CD4-positive, alpha-beta memory T cell (primary cell): ENCODE measurements at regions of chr1 and their contacts with region 1.

Region 1: GRCh38 chr1:235128456-235129328 is at the start of gene TOMM20:
- DNase-seq: peak; percentile 95 to 97 (median 96)
- H3K4me3 ChIP-seq: peak within 1 kb of the TSS; percentile 64 to 83
- H3K4me3 Mint-ChIP-seq: peak within 1 kb of the TSS; percentile 89 to 98 (median 97)
- H3K27ac ChIP-seq: peak within 1 kb of the TSS; percentile 94
- H3K27ac Mint-ChIP-seq: peak within 1 kb of the TSS; percentile 95 to 99 (median 97)
- H3K4me1 ChIP-seq: peaks cover 41% of the 10 kb centered on the region
- H3K4me1 Mint-ChIP-seq: peaks cover 19 to 51% (median 32%) of the 10 kb centered on the region in 4 donors
- H3K27me3 ChIP-seq: no peaks in the 10 kb centered on the region
- H3K27me3 Mint-ChIP-seq: no peaks in the 10 kb centered on the region
- total RNA-seq, gene TOMM20: 102 to 108 TPM

Region 2: DNA sequence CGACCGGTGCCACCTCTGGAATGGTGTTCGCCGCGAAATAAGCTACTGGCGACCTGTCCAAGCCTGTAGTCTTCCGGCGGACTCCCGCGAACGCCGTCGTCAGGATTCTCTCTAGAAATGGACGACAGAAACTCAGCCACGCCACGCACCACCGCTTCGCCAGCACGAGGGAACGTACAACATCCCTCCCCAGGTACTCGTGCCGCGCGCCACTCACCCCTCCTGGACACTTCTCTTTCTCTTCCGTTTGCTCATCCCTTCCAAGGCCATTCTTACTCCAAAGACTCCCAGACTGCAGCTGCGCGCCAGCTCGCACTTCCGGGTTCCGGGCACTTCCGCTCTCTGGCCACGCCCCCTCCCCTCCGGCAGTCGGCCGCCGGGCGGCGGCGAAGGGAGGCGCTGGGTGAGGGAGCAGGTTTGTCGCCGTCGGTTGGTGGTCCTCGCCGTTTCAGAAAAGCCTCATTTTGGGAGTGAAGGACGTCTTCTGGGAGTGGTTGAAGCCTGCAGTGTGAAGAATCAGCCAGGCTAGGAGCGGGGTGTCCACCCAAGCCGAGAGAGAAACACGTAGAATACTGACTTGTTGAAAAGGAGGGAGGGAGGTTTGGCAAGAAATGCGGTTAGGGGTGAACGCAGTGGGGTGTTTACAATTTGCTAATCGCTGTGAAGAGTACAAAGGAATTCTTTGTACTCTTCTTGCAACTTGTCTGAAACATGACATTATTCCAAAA is 32.4 kb after region 1 on chr1 and contains the start of gene RBM34:
- CTCF ChIA-PET with region 1: no interaction called
- POLR2A ChIA-PET with region 1: interaction called, 42 read pairs
- intact Hi-C with region 1: loop called (anchors 1 kb)
- DNase-seq: peak; percentile 90 to 93 (median 91)
- H3K4me3 ChIP-seq: peak within 1 kb of the TSS; percentile 79 to 80
- H3K4me3 Mint-ChIP-seq: peak within 1 kb of the TSS; percentile 94 to 99 (median 98)
- H3K27ac ChIP-seq: peak within 1 kb of the TSS; percentile 92
- H3K27ac Mint-ChIP-seq: peak within 1 kb of the TSS; percentile 95 to 99 (median 98)
- H3K4me1 ChIP-seq: peaks cover 50% of the 10 kb centered on the region
- H3K4me1 Mint-ChIP-seq: peaks cover 15 to 30% (median 22%) of the 10 kb centered on the region in 4 donors
- H3K27me3 ChIP-seq: no peaks in the 10 kb centered on the region
- H3K27me3 Mint-ChIP-seq: no peaks in the 10 kb centered on the region
- total RNA-seq, gene RBM34: 120 TPM